ENCODE measurements at regions of chr5 and their contacts with region 1.

Region 1: DNA sequence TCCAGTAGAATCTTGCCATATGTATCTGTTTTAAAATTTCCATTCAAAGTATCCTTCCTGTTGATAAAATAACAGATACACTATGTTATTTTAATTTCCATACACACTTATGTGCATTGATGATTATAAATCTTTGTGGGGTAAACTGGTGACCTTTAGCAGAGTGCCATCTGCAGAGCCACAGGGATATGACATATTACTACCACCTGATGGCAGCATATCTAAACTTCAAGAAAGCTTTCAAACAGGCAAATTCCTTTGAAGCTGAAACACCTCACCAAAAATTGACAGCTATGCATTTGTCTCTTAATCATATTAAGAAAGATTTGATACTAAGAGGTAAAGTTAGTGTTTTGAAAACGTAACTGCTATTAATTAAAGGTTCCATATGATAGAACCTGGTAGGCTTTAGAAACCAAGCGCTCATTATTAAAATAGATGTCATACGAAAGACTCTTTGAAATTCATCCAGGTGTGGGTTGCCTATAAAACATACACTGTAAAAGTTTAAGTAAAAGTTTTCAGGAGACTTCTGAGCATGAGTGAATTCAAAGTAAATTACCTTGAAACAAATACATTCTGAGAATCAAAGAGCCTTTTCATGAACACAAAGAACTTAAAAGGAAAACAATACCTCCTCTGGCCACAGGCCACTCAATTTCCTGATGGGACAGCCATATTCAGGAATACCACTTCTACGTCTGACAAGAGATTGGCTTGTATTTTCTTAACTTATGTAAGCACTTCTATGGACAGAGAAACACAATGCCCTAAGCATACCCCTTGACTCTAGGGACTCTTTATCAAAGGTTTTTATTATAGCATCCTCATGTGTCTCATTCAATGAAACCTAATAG is 93.3 kb downstream of the KIAA0825 start:
- DNase-seq: peak in 4 of 14 experiments; percentile 15 to 70 (median 64)
- ATAC-seq: no peak
- H3K4me3 ChIP-seq: no peak overlapping the region
- H3K4me3 Mint-ChIP-seq: no peak overlapping the region
- H3K27ac ChIP-seq: no peak overlapping the region
- H3K27ac Mint-ChIP-seq: no peak overlapping the region
- H3K4me1 ChIP-seq: no peaks in the 10 kb centered on the region
- H3K4me1 Mint-ChIP-seq: no peaks in the 10 kb centered on the region
- H3K27me3 ChIP-seq: no peaks in the 10 kb centered on the region
- H3K27me3 Mint-ChIP-seq: no peaks in the 10 kb centered on the region
- CTCF ChIP-seq: peak; percentile 65

Region 2: DNA sequence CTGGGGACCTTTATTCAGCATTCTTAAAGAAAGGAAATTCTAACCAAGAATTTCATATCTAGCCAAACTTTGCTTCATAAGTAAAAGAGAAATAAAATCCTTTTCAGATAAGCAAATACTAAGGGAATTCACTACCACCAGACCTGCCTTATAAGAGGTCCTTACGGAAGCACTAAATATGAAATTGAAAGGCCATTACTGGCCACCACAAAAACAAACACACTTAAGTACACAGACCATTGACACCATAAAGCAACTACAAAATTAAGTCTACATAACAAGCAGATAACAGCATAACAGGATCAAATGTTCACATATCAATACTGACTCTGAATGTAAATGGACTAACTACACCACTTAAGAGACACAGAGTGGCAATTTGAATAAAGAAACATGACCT is 422.2 kb before region 1 on chr5:
- CTCF ChIA-PET with region 1: no interaction called
- POLR2A ChIA-PET with region 1: no interaction called
- intact Hi-C with region 1: no loop called
- DNase-seq: no peak
- ATAC-seq: no peak
- H3K4me3 ChIP-seq: no peak overlapping the region
- H3K4me3 Mint-ChIP-seq: no peak overlapping the region
- H3K27ac ChIP-seq: no peak overlapping the region
- H3K27ac Mint-ChIP-seq: no peak overlapping the region
- H3K4me1 ChIP-seq: no peaks in the 10 kb centered on the region
- H3K4me1 Mint-ChIP-seq: peaks cover 71% of the 10 kb centered on the region
- H3K27me3 ChIP-seq: no peaks in the 10 kb centered on the region
- H3K27me3 Mint-ChIP-seq: no peaks in the 10 kb centered on the region
- CTCF ChIP-seq: no peak

Region 3: GRCh38 chr5:94613583-94613982 is 88.5 kb after region 1 on chr5:
- CTCF ChIA-PET with region 1: interaction called, 4 read pairs
- POLR2A ChIA-PET with region 1: no interaction called
- intact Hi-C with region 1: loop called (anchors 2 to 5 kb)
- DNase-seq: peak in 3 of 14 experiments; percentile 15 to 31 (median 20)
- ATAC-seq: no peak
- H3K4me3 ChIP-seq: no peak overlapping the region
- H3K4me3 Mint-ChIP-seq: no peak overlapping the region
- H3K27ac ChIP-seq: no peak overlapping the region
- H3K27ac Mint-ChIP-seq: no peak overlapping the region
- H3K4me1 ChIP-seq: peaks cover 8% of the 10 kb centered on the region
- H3K4me1 Mint-ChIP-seq: peaks cover 24% of the 10 kb centered on the region
- H3K27me3 ChIP-seq: no peaks in the 10 kb centered on the region
- H3K27me3 Mint-ChIP-seq: no peaks in the 10 kb centered on the region
- CTCF ChIP-seq: no peak

Region 4: GRCh38 chr5:94618493-94619328 is 93.6 kb after region 1 on chr5 and contains the starts of genes KIAA0825 and SLF1:
- CTCF ChIA-PET with region 1: interaction called, 4 read pairs
- POLR2A ChIA-PET with region 1: no interaction called
- intact Hi-C with region 1: loop called (anchors 2 to 5 kb)
- DNase-seq: peak; percentile 71 to 92 (median 80)
- ATAC-seq: peak; percentile 87
- H3K4me3 ChIP-seq: peak within 1 kb of the TSS; percentile 93
- H3K4me3 Mint-ChIP-seq: peak within 1 kb of the TSS; percentile 92
- H3K27ac ChIP-seq: peak within 1 kb of the TSS; percentile 37 to 67
- H3K27ac Mint-ChIP-seq: peak within 1 kb of the TSS; percentile 89
- H3K4me1 ChIP-seq: peaks cover 20% of the 10 kb centered on the region
- H3K4me1 Mint-ChIP-seq: peaks cover 51% of the 10 kb centered on the region
- H3K27me3 ChIP-seq: no peaks in the 10 kb centered on the region
- H3K27me3 Mint-ChIP-seq: no peaks in the 10 kb centered on the region
- CTCF ChIP-seq: no peak
- total RNA-seq, gene KIAA0825: 1.5 to 1.6 TPM
- total RNA-seq, gene SLF1: 7.7 to 7.9 TPM

Region 5: GRCh38 chr5:94693043-94693822 is 168.2 kb after region 1 on chr5:
- CTCF ChIA-PET with region 1: interaction called, 3 read pairs
- POLR2A ChIA-PET with region 1: no interaction called
- intact Hi-C with region 1: loop called (anchors 1 to 5 kb)
- DNase-seq: peak in 3 of 14 experiments; percentile 55 to 62 (median 58)
- ATAC-seq: no peak
- H3K4me3 ChIP-seq: no peak overlapping the region
- H3K4me3 Mint-ChIP-seq: no peak overlapping the region
- H3K27ac ChIP-seq: no peak overlapping the region
- H3K27ac Mint-ChIP-seq: no peak overlapping the region
- H3K4me1 ChIP-seq: no peaks in the 10 kb centered on the region
- H3K4me1 Mint-ChIP-seq: no peaks in the 10 kb centered on the region
- H3K27me3 ChIP-seq: no peaks in the 10 kb centered on the region
- H3K27me3 Mint-ChIP-seq: no peaks in the 10 kb centered on the region
- CTCF ChIP-seq: peak; percentile 32

Region 6: GRCh38 chr5:94740286-94740685 is 215.2 kb after region 1 on chr5:
- CTCF ChIA-PET with region 1: interaction called, 10 read pairs
- POLR2A ChIA-PET with region 1: no interaction called
- intact Hi-C with region 1: loop called in 1 of 2 experiments (anchors 2 kb)
- DNase-seq: no peak
- ATAC-seq: no peak
- H3K4me3 ChIP-seq: no peak overlapping the region
- H3K4me3 Mint-ChIP-seq: no peak overlapping the region
- H3K27ac ChIP-seq: no peak overlapping the region
- H3K27ac Mint-ChIP-seq: no peak overlapping the region
- H3K4me1 ChIP-seq: peaks cover 4% of the 10 kb centered on the region
- H3K4me1 Mint-ChIP-seq: no peaks in the 10 kb centered on the region
- H3K27me3 ChIP-seq: no peaks in the 10 kb centered on the region
- H3K27me3 Mint-ChIP-seq: peaks cover 4% of the 10 kb centered on the region
- CTCF ChIP-seq: no peak

Region 7: GRCh38 chr5:94849821-94850736 is 325.0 kb after region 1 on chr5:
- CTCF ChIA-PET with region 1: interaction called, 3 read pairs
- POLR2A ChIA-PET with region 1: no interaction called
- intact Hi-C with region 1: loop called (anchors 1 to 2 kb)
- DNase-seq: peak in 5 of 14 experiments; percentile 7 to 69 (median 58)
- ATAC-seq: peak; percentile 89
- H3K4me3 ChIP-seq: no peak overlapping the region
- H3K4me3 Mint-ChIP-seq: no peak overlapping the region
- H3K27ac ChIP-seq: no peak overlapping the region
- H3K27ac Mint-ChIP-seq: no peak overlapping the region
- H3K4me1 ChIP-seq: no peaks in the 10 kb centered on the region
- H3K4me1 Mint-ChIP-seq: no peaks in the 10 kb centered on the region
- H3K27me3 ChIP-seq: no peaks in the 10 kb centered on the region
- H3K27me3 Mint-ChIP-seq: no peaks in the 10 kb centered on the region
- CTCF ChIP-seq: peak; percentile 66